ENCODE measurements at regions of chr5 and their contacts with region 1.

Region 1: DNA sequence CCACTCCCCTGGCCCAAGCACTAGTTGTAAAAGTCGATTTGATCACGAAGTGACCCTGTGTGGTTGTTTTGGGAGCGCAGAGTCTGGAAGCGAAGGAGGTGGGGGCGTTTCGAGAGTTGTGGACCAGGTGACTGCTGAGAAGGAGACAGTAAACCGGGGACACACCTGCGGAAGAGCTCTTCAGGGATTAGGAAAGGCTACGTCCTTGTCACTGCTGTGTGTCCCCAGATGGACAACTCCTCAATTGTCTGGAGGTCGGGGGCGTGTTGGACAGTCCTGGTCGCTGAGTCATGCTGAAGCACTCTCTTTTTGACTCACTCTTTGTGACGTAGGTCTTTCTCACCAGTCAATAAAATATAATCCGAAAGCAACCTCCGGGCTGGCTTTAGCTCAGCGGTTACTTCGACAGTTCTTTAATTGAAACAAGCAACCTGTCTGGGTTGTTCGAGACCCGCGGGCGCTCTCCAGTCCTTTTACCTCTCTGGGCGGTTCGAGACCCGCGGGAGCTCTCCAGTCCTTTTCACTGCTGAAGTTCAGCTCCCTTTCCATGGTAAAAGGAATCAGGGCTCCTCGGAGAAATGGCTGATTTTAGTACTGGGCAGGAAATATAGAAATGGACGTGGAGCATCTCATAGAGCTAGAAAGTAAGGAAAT is 10.8 kb downstream of the ZMAT2 start:
- DNase-seq: peak; percentile 94
- H3K4me3 Mint-ChIP-seq: peak overlapping the region; percentile 92
- H3K27ac Mint-ChIP-seq: peak overlapping the region; percentile 95
- H3K4me1 Mint-ChIP-seq: peaks cover 18% of the 10 kb centered on the region
- H3K27me3 Mint-ChIP-seq: peaks cover 3% of the 10 kb centered on the region

Region 2: DNA sequence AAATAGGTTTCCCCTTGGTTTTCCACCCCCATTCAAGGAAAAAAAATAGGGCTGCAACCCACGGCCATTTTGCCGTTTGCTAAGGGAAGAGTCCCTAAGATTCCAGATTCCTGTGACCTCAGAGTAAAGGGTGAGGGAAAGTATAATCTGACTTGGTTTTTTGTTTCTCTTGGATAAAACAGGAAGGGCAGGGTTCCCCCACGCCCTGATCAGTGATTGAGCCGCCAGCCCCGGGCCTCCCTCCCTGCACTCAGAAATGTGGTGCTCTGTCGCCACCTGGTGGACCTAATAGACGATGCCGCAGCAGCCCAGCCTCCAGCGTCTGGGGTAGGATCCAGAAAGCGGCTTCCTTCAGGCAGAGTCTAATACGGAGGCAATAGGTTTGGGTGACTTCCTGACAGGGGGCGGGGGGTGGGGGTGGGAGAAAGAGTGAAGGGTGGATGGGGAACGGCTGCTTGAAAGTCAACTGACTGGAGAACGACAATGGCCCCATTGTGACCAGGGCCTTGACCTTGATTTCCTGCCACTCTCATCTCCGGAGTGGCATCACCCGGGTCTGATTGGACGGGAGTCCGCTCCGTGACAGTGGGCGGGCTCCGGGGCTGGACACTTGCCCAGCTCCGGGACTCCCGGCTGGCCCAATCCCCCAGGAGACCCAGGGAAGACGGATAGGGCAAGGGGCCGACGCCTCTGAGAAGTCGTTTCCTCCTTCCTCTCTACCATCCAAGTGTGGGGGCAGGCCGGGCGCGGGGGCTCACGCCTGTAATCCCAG is 553.8 kb before region 1 on chr5:
- CTCF ChIA-PET with region 1: no interaction called
- intact Hi-C with region 1: no loop called
- DNase-seq: peak; percentile 94
- H3K4me3 Mint-ChIP-seq: peak overlapping the region; percentile 42
- H3K27ac Mint-ChIP-seq: no peak overlapping the region
- H3K4me1 Mint-ChIP-seq: peaks cover 4% of the 10 kb centered on the region
- H3K27me3 Mint-ChIP-seq: no peaks in the 10 kb centered on the region

Region 3: DNA sequence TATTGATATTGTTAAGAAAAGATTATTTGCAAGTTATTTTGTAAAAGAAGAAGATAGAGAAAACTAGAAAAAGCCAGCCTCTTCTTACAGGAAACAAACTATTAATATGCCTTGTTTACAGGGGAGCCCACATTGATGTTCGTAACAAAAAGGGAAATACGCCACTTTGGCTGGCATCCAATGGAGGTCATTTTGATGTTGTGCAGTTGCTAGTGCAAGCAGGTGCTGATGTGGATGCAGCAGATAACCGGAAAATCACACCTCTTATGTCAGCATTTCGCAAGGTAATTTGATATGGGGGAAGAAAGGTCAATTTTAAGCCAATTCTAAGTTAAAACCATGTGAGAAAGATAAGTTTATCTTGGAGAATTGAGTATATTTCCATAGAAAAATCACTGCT is 201.1 kb before region 1 on chr5:
- CTCF ChIA-PET with region 1: no interaction called
- intact Hi-C with region 1: no loop called
- DNase-seq: no peak
- H3K4me3 Mint-ChIP-seq: no peak overlapping the region
- H3K27ac Mint-ChIP-seq: no peak overlapping the region
- H3K4me1 Mint-ChIP-seq: no peaks in the 10 kb centered on the region
- H3K27me3 Mint-ChIP-seq: no peaks in the 10 kb centered on the region

Region 4: GRCh38 chr5:140557136-140557805 is 153.8 kb before region 1 on chr5 and contains the start of gene SRA1:
- CTCF ChIA-PET with region 1: interaction called, 4 read pairs
- intact Hi-C with region 1: loop called (anchors 2 kb)
- DNase-seq: peak; percentile 92
- H3K4me3 Mint-ChIP-seq: peak within 1 kb of the TSS; percentile 79
- H3K27ac Mint-ChIP-seq: peak within 1 kb of the TSS; percentile 93
- H3K4me1 Mint-ChIP-seq: peaks cover 46% of the 10 kb centered on the region
- H3K27me3 Mint-ChIP-seq: no peaks in the 10 kb centered on the region
- total RNA-seq, gene SRA1: 38.0 to 39.6 TPM

Region 5: GRCh38 chr5:140647042-140647341 is 64.0 kb before region 1 on chr5:
- CTCF ChIA-PET with region 1: interaction called, 3 read pairs
- intact Hi-C with region 1: loop called (anchors 1 kb)
- DNase-seq: no peak
- H3K4me3 Mint-ChIP-seq: peak overlapping the region; percentile 100
- H3K27ac Mint-ChIP-seq: peak overlapping the region; percentile 99
- H3K4me1 Mint-ChIP-seq: peaks cover 40% of the 10 kb centered on the region
- H3K27me3 Mint-ChIP-seq: no peaks in the 10 kb centered on the region

Region 6: DNA sequence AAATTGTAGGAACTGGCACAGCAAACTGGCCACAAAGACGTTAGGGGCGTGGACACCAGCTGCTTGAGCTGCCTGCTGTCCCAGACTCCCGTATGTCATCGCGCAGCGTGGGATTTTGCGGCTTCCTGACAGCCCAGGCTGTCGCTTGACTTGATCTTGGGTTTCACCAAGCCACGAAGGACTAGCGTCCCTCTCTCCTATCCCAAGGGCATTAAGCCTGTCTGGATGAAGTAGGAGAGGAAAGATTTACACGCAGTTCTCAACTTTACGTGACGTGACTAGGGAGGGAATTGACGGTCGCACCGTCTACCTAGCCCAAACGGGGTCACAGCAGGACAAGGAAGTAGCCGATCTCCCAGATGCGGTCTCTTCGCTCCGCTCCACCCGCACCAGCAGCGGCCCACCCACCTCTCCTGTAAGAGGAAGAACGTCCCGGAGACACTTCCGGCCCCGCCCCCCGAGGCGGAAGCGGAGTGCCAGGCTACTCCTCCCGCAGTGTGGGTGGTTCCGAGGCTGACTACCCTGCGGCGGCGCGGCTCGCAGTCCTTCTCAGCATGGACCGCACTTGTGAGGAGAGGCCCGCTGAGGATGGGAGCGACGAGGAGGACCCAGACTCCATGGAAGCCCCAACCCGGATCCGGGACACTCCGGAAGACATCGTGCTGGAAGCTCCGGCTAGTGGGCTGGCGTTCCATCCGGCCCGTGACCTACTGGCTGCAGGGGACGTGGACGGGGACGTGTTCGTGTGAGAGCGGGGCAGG is 46.5 kb before region 1 on chr5 and contains the start of gene WDR55:
- CTCF ChIA-PET with region 1: interaction called, 3 read pairs
- intact Hi-C with region 1: loop called (anchors 1 kb)
- DNase-seq: peak; percentile 97
- H3K4me3 Mint-ChIP-seq: peak within 1 kb of the TSS; percentile 97
- H3K27ac Mint-ChIP-seq: peak within 1 kb of the TSS; percentile 91
- H3K4me1 Mint-ChIP-seq: peaks cover 33% of the 10 kb centered on the region
- H3K27me3 Mint-ChIP-seq: no peaks in the 10 kb centered on the region
- total RNA-seq, gene WDR55: 18.9 to 19.8 TPM

Region 7: GRCh38 chr5:140690941-140691924 is 19.8 kb before region 1 on chr5 and contains the starts of genes HARS1 and HARS2:
- CTCF ChIA-PET with region 1: interaction called, 3 read pairs
- intact Hi-C with region 1: loop called (anchors 1 kb)
- DNase-seq: peak; percentile 92
- H3K4me3 Mint-ChIP-seq: peak within 1 kb of the TSS; percentile 100
- H3K27ac Mint-ChIP-seq: peak within 1 kb of the TSS; percentile 97
- H3K4me1 Mint-ChIP-seq: peaks cover 35% of the 10 kb centered on the region
- H3K27me3 Mint-ChIP-seq: no peaks in the 10 kb centered on the region
- total RNA-seq, gene HARS1: 69.0 to 74.8 TPM
- total RNA-seq, gene HARS2: 27.4 to 29.3 TPM

Region 8: GRCh38 chr5:140700177-140701144 is 10.6 kb before region 1 on chr5 and contains the start of gene ZMAT2:
- CTCF ChIA-PET with region 1: interaction called, 4 read pairs
- intact Hi-C with region 1: loop called (anchors 1 kb)
- DNase-seq: peak; percentile 97
- H3K4me3 Mint-ChIP-seq: peak within 1 kb of the TSS; percentile 97
- H3K27ac Mint-ChIP-seq: peak within 1 kb of the TSS; percentile 87
- H3K4me1 Mint-ChIP-seq: peaks cover 24% of the 10 kb centered on the region
- H3K27me3 Mint-ChIP-seq: no peaks in the 10 kb centered on the region
- total RNA-seq, gene ZMAT2: 52.9 to 58.8 TPM

Region 9: DNA sequence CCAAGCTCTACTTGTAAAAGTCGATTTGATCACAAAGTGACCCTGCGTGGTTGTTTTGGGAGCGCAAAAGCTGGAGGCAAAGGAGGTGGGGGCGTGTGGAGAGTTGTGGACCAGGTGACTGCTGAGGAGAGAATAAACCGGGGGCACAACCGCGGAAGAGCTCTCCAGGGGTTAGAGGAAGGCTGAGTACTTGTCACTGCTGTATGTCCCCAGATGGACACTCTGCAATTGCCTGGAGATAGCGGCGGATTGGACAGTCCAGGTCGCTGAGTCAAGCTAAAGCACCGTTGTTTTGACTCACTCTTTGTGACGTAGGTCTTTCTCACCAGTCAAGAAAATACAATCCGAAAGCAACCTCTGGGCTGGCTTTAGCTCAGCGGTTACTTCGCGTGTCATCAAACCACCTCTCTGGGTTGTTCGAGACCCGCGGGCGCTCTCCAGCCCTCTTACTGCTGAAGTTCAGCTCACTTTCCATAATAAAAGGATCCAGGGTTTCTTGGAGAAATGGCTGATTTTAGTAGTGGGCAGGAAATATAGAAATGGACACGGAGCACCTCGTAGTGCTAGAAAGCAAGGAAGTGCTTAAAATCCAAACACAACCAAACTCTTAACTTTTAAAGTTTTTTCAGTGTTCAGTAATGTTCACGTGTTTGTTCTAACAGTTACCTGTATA is 14.9 kb after region 1 on chr5:
- CTCF ChIA-PET with region 1: interaction called, 7 read pairs
- intact Hi-C with region 1: loop called (anchors 1 kb)
- DNase-seq: peak; percentile 90
- H3K4me3 Mint-ChIP-seq: peak overlapping the region; percentile 69
- H3K27ac Mint-ChIP-seq: peak overlapping the region; percentile 81
- H3K4me1 Mint-ChIP-seq: peaks cover 6% of the 10 kb centered on the region
- H3K27me3 Mint-ChIP-seq: peaks cover 31% of the 10 kb centered on the region

Region 10: GRCh38 chr5:140764177-140765020 is 53.4 kb after region 1 on chr5:
- CTCF ChIA-PET with region 1: no interaction called
- intact Hi-C with region 1: no loop called
- DNase-seq: no peak
- H3K4me3 Mint-ChIP-seq: no peak overlapping the region
- H3K27ac Mint-ChIP-seq: no peak overlapping the region
- H3K4me1 Mint-ChIP-seq: no peaks in the 10 kb centered on the region
- H3K27me3 Mint-ChIP-seq: peaks cover 5% of the 10 kb centered on the region

Measured in activated naive CD4-positive, alpha-beta T cell treated with anti-CD3 and anti-CD28 coated beads for 36 hours (primary cell).